PC-9 (cell line): ENCODE measurements at regions of chr17 and their contacts with region 1.

Region 1: GRCh38 chr17:716238-716637 is 1.6 kb upstream of the VPS53 start:
- DNase-seq: no peak
- H3K4me3 ChIP-seq: no peak overlapping the region; the same call in 1 of the 2 replicates
- H3K27ac ChIP-seq: no peak overlapping the region
- H3K4me1 ChIP-seq: peaks cover 26% of the 10 kb centered on the region
- H3K27me3 ChIP-seq: no peaks in the 10 kb centered on the region
- CTCF ChIP-seq: no peak

Region 2: GRCh38 chr17:606508-607250 is 109.6 kb before region 1 on chr17:
- CTCF ChIA-PET with region 1: interaction called, 12 read pairs
- POLR2A ChIA-PET with region 1: no interaction called
- intact Hi-C with region 1: no loop called
- DNase-seq: no peak
- H3K4me3 ChIP-seq: no peak overlapping the region
- H3K27ac ChIP-seq: no peak overlapping the region
- H3K4me1 ChIP-seq: no peaks in the 10 kb centered on the region
- H3K27me3 ChIP-seq: no peaks in the 10 kb centered on the region
- CTCF ChIP-seq: no peak

Region 3: DNA sequence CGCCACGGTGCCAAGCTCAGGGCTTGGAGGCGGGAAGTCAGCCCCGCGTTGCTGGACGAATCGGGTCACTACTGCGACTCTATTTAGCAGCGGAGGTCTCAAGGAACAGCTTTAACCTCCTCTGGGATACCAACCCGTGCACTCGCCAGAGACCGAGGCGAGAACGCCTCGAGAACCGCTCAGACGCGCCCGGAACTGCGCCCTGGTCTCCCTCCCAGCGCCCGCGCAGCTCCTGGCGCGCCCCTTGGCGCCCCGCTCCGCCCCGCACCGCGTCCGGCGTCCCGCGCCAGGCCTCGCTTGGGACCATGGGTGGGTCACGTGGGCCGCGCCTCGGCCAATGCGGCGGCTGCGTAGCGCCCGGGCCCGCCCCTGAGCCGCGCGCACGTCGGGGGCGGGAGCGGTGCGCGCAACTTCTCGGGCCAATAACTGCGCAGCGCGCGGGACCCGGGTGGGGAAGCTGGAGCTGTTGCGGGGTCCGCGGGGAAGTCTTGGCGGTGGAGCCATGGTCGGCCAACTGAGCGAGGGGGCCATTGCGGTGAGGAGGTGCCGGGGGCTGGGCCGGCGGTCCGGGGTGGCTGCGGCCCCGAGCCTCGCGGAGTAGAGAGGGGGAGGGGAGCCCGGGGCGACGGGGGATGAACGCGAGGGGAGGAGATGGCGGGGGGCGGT is 1113.5 kb after region 1 on chr17 and contains the starts of genes RPA1 and SMYD4:
- CTCF ChIA-PET with region 1: no interaction called
- POLR2A ChIA-PET with region 1: interaction called, 16 read pairs
- intact Hi-C with region 1: no loop called
- DNase-seq: peak; percentile 70 to 92
- H3K4me3 ChIP-seq: peak within 1 kb of the TSS; percentile 96
- H3K27ac ChIP-seq: peak within 1 kb of the TSS; percentile 27; the same call in 1 of the 2 replicates
- H3K4me1 ChIP-seq: peaks cover 18% of the 10 kb centered on the region
- H3K27me3 ChIP-seq: no peaks in the 10 kb centered on the region
- CTCF ChIP-seq: no peak
- total RNA-seq, gene RPA1: 201 and 212 TPM in 2 replicates
- total RNA-seq, gene SMYD4: 19.0 and 23.3 TPM in 2 replicates